Motor neuron (in vitro differentiated cells): ENCODE measurements at regions of chr2 and their contacts with region 1.

Region 1: GRCh38 chr2:192162392-192163042 is 32.2 kb downstream of the TMEFF2 start:
- ATAC-seq: peak; percentile 39 to 86 (median 60)
- H3K4me3 ChIP-seq: no peak overlapping the region
- H3K27ac ChIP-seq: no peak overlapping the region
- H3K4me1 ChIP-seq: peaks cover 0 to 6% of the 10 kb centered on the region in 2 donors

Region 2: GRCh38 chr2:192029089-192029488 is 133.4 kb before region 1 on chr2:
- in situ Hi-C with region 1: loop called in 1 of 9 experiments (anchors 25 kb)
- ATAC-seq: no peak
- H3K4me3 ChIP-seq: no peak overlapping the region
- H3K27ac ChIP-seq: no peak overlapping the region
- H3K4me1 ChIP-seq: peaks cover 9 to 24% of the 10 kb centered on the region in 2 donors

Region 3: DNA sequence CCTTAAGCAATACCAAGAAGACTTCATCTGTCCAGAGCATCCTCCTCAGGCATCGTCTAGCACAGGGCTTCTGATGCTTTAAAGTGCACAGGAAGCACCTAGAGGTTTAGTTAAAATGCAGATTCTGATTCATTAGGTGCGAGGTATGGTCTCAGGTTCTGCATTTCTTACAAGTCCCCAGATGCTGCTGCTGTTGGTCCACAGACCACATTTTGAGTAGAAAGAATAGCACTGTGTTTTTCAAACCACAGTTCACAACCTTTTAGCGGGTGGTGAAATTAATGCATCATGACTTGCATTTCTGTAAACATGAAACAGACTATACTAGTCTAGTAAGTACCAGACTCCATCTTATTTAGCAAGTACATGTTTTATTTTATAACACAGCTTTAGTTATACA is 102.4 kb before region 1 on chr2:
- in situ Hi-C with region 1: no loop called
- ATAC-seq: peak in 4 of 8 experiments; percentile 12 to 39 (median 27)
- H3K4me3 ChIP-seq: no peak overlapping the region
- H3K27ac ChIP-seq: no peak overlapping the region
- H3K4me1 ChIP-seq: peaks cover 0 to 11% of the 10 kb centered on the region in 2 donors

Region 4: DNA sequence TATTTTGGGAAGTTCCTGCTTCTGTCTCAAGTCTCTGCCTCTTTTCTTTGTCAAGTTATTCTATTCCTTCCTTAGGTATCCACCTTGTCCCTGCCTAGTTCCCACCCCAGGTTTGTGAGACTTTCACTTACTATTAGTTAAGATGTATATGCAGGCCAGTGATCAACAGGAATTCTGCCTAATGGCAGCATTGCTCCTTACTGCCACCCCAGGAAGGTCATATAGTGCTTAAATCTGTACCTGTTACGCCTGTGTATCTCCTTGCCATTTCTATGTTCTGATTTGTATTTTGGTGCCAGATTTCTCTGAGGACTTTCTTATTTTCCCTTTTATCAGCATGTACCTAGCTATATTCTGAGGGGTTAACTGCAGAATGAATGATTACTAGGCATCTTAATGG is 778.3 kb after region 1 on chr2:
- in situ Hi-C with region 1: no loop called
- ATAC-seq: no peak
- H3K4me3 ChIP-seq: no peak overlapping the region
- H3K27ac ChIP-seq: no peak overlapping the region
- H3K4me1 ChIP-seq: no peaks in the 10 kb centered on the region